Naive thymus-derived CD8-positive, alpha-beta T cell (primary cell): ENCODE measurements at regions of chr5 and their contacts with region 1.

Region 1: GRCh38 chr5:80191991-80192398 is 63.9 kb downstream of the SERINC5 start:
- DNase-seq: peak; percentile 24 to 81 (median 56)
- ATAC-seq: peak; percentile 74 to 82
- H3K4me3 Mint-ChIP-seq: peak overlapping the region; percentile 78 to 90 (median 85)
- H3K27ac Mint-ChIP-seq: peak overlapping the region; percentile 79 to 99 (median 94)
- H3K4me1 Mint-ChIP-seq: peaks cover 57 to 96% (median 87%) of the 10 kb centered on the region in 4 donors
- H3K27me3 Mint-ChIP-seq: no peaks in the 10 kb centered on the region

Region 2: DNA sequence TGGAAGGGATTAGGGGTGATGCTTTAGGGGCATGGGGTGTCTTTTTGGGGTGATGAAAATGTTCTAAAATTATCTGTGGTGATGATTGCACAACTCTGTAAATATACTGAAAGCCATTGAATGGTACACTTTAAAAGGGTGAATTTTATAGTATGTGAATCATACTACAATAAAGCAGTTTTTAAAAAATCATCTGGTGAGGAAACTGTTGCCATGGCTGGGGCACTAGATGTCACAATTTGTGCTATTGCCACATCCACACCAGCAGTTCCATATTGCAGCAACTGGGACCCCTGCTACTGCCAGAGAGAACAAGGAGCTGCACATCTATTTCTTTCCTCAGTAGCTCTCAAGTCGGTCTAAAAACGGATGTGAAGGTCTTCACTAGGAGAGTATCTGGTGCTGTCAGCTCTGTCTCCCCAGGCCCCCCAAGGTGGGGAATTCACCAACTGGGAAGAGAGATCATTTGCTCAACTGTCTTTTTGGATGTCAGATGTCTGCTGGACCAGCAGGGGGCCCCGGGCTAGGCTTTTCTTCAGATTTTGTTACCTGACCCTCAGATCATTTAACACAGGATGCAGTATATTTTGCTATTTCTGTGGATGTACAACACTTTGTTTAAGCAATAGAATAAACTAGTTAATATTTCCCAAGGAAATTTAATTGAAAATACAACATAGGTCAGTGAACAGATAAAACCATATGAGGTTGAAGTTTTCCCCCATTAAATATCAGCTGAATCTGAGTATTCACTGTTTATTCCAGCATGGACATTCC is 489.2 kb before region 1 on chr5:
- POLR2A ChIA-PET with region 1: no interaction called
- DNase-seq: peak in 8 of 10 donors; percentile 13 to 54 (median 29)
- ATAC-seq: peak in 1 of 2 donors; percentile 48
- H3K4me3 Mint-ChIP-seq: no peak overlapping the region
- H3K27ac Mint-ChIP-seq: no peak overlapping the region
- H3K4me1 Mint-ChIP-seq: peaks cover 0 to 2% (median 0%) of the 10 kb centered on the region in 4 donors
- H3K27me3 Mint-ChIP-seq: no peaks in the 10 kb centered on the region

Region 3: GRCh38 chr5:80134879-80135278 is 57.1 kb before region 1 on chr5:
- POLR2A ChIA-PET with region 1: interaction called, 43 read pairs
- DNase-seq: no peak
- ATAC-seq: no peak
- H3K4me3 Mint-ChIP-seq: peak overlapping the region in 9 of 10 donors; percentile 38 to 83 (median 75)
- H3K27ac Mint-ChIP-seq: peak overlapping the region; percentile 85 to 98 (median 92)
- H3K4me1 Mint-ChIP-seq: peaks cover 54 to 92% (median 87%) of the 10 kb centered on the region in 4 donors
- H3K27me3 Mint-ChIP-seq: no peaks in the 10 kb centered on the region

Region 4: GRCh38 chr5:80153586-80154126 is 38.3 kb before region 1 on chr5:
- POLR2A ChIA-PET with region 1: interaction called, 29 read pairs
- DNase-seq: peak in 7 of 10 donors; percentile 23 to 77 (median 73)
- ATAC-seq: peak; percentile 65 to 71
- H3K4me3 Mint-ChIP-seq: peak overlapping the region in 9 of 10 donors; percentile 28 to 87 (median 79)
- H3K27ac Mint-ChIP-seq: peak overlapping the region; percentile 94 to 100 (median 98)
- H3K4me1 Mint-ChIP-seq: peaks cover 24 to 95% (median 71%) of the 10 kb centered on the region in 4 donors
- H3K27me3 Mint-ChIP-seq: no peaks in the 10 kb centered on the region

Region 5: DNA sequence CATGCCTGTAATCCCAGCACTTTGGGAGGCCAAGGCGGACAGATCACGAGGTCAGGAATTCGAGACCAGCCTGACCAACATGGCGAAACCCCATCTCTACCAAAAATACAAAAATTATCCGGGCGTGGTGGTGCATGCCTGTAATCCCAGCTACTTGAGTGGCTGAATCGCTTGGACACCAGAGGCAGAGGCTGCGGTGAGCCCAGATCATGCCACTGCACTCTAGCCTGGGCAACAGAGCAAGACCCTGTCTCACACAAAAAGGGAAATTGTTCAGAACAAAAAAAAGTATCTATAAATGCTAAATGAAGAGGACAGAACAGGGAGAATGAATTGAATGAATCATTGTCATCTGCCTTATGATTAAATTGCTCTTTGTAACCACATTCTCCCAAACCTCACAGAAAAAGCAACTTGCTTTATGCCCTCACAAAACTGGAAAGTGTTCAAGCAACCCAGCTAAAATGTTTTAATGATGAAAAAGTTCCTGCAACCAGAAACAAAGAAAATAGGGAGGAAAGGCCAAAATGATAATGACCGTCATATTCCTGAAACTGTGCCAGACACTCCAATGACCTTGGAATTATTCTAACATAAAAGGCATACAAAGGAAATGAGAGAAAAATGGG is 19.8 kb before region 1 on chr5:
- POLR2A ChIA-PET with region 1: interaction called, 187 read pairs
- DNase-seq: no peak
- ATAC-seq: no peak
- H3K4me3 Mint-ChIP-seq: peak overlapping the region in 1 of 10 donors; percentile 6
- H3K27ac Mint-ChIP-seq: peak overlapping the region in 9 of 10 donors; percentile 22 to 89 (median 62)
- H3K4me1 Mint-ChIP-seq: peaks cover 30 to 71% (median 49%) of the 10 kb centered on the region in 4 donors
- H3K27me3 Mint-ChIP-seq: no peaks in the 10 kb centered on the region

Region 6: DNA sequence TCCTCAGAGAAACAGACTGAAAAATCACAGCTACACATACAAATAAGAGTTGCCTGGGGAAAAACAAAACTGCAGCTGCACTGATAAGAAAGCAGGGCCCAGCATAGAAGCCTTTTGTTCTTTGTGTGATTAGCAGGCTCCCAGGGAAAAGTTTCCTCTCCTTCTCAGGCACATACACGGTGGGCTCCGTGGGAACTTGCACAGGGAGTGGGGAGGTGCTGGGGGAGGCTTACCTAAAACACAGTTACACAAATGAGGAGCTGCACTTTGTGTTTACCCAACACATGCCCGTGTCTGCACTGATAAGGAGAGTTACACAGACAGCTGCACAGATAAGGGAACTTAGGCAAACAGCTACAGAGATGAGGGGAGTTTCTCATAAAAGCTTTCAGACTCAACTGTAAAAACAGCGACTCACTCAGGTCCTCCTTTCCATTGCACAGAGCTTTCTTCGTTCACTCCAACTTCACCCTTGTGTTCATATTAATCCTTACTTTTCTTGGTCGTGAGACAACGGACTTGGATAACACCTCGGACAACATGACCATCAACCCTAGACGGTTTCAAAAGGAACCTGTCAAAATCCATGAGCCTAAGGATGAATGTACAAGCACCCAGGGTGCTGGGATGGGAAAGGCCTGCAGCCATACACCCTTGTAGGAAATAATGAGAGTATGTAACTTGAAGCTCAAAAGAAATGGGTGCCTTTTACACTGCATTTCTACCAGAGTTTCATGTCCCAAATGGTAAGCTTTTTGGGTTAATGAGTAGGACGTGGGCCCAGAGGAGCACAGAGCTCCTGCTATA is 13.0 kb after region 1 on chr5:
- POLR2A ChIA-PET with region 1: interaction called, 187 read pairs
- DNase-seq: peak in 2 of 10 donors; percentile 48 to 53
- ATAC-seq: peak; percentile 77 to 90
- H3K4me3 Mint-ChIP-seq: peak overlapping the region; percentile 49 to 82 (median 58)
- H3K27ac Mint-ChIP-seq: peak overlapping the region; percentile 84 to 96 (median 92)
- H3K4me1 Mint-ChIP-seq: peaks cover 43 to 92% (median 88%) of the 10 kb centered on the region in 4 donors
- H3K27me3 Mint-ChIP-seq: no peaks in the 10 kb centered on the region

Region 7: DNA sequence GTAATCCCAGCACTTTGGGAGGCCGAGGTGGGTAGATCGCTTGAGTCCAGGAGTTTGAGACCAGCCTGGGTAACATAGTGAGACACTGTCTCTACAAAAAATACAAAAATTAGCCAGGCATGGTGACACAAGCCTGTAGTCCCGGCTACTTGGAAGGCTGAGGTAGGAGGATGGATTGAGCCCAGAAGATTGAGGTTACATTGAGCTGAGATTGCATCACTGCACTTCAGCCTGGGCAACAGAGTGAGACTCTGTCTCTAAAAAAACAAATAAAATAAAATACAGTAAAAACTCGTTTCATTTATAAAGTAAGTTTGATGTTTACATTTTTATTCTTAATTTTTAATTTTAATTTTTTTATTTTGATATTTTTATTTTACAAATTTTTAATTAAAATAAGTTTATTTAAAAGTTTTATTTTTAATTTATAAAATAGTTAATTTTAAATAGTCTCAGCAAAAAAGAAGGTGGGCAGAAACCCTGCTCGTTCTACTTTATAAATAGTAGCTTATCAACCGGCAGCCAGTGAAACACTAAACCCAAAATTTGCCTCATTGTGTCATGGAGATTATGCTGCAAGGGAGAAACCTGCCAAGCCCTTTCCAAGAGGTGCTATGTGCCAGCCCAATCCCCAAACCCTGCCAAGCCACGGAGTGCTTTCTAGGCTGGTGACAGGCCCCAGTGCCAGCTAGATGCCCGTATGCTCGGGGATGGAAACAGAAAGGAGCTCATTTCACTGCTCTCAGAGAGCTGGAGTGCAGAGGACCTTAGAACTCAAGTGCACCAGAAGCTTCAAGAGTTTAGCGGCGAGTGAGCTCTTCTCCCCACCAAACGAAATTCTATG is 25.0 kb after region 1 on chr5:
- POLR2A ChIA-PET with region 1: interaction called, 109 read pairs
- DNase-seq: peak in 1 of 10 donors; percentile 19
- ATAC-seq: peak; percentile 26 to 35
- H3K4me3 Mint-ChIP-seq: peak overlapping the region; percentile 46 to 92 (median 82)
- H3K27ac Mint-ChIP-seq: peak overlapping the region; percentile 85 to 98 (median 94)
- H3K4me1 Mint-ChIP-seq: peaks cover 51 to 95% (median 93%) of the 10 kb centered on the region in 4 donors
- H3K27me3 Mint-ChIP-seq: no peaks in the 10 kb centered on the region